ENCODE measurements at regions of chrX and their contacts with region 1.

Region 1: GRCh38 chrX:11470250-11470974 is 177.2 kb downstream of the AMELX start:
- DNase-seq: no peak
- H3K4me3 ChIP-seq: no peak overlapping the region
- H3K27ac ChIP-seq: no peak overlapping the region
- H3K4me1 ChIP-seq: no peaks in the 10 kb centered on the region
- H3K27me3 ChIP-seq: no peaks in the 10 kb centered on the region
- CTCF ChIP-seq: no peak
- POLR2A ChIP-seq: no peak

Region 2: DNA sequence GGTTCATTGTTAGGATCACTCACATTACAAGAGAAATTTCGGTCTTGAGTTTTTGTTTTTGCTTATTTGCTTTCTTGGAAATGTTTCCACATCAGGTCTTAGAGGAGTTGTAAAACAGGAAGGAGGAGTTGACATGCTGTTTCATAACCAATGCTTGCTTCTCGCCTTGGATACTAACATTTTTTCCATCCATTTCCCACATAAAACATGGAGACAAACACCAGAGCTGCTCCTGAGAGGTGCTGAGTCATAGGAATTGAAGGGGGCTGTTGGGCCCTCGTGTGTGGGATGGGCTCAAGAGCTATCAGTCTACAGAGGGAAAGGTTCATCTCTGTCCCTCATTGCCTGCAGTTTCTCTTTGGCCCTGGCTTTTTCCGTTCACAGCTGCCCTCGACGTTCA is 1975.6 kb before region 1 on chrX:
- intact Hi-C with region 1: no loop called
- DNase-seq: no peak
- H3K4me3 ChIP-seq: no peak overlapping the region
- H3K27ac ChIP-seq: peak overlapping the region; percentile 27
- H3K4me1 ChIP-seq: no peaks in the 10 kb centered on the region
- H3K27me3 ChIP-seq: no peaks in the 10 kb centered on the region
- CTCF ChIP-seq: no peak
- POLR2A ChIP-seq: no peak

Region 3: GRCh38 chrX:9758021-9758638 is 1712.3 kb before region 1 on chrX:
- intact Hi-C with region 1: no loop called
- DNase-seq: no peak
- H3K4me3 ChIP-seq: no peak overlapping the region
- H3K27ac ChIP-seq: no peak overlapping the region
- H3K4me1 ChIP-seq: no peaks in the 10 kb centered on the region
- H3K27me3 ChIP-seq: no peaks in the 10 kb centered on the region
- CTCF ChIP-seq: no peak
- POLR2A ChIP-seq: no peak

Region 4: DNA sequence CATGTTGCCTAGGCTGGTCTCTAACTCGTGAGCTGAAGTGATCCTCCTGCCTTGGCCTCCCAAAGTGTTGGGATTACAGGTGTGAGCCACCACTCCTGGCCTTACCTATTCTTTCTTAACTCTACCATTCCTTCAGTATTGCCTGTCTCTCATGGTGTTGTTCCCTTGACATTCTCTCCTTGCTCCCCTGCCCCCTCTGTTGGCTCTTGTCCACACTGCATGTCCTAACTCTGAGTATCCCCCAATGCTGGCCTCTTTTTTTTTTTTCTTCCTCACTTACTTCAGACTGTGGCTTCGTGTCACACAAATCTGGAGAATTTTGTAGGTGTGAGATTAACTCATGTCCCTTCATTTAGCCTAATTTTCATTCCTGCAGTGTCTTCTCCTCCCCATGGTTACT is 645.0 kb after region 1 on chrX:
- intact Hi-C with region 1: no loop called
- DNase-seq: no peak
- H3K4me3 ChIP-seq: no peak overlapping the region
- H3K27ac ChIP-seq: no peak overlapping the region
- H3K4me1 ChIP-seq: no peaks in the 10 kb centered on the region
- H3K27me3 ChIP-seq: no peaks in the 10 kb centered on the region
- CTCF ChIP-seq: no peak
- POLR2A ChIP-seq: no peak

Region 5: GRCh38 chrX:12984629-12985319 is 1514.4 kb after region 1 on chrX:
- intact Hi-C with region 1: loop called (anchors 5 kb)
- DNase-seq: no peak
- H3K4me3 ChIP-seq: no peak overlapping the region
- H3K27ac ChIP-seq: no peak overlapping the region
- H3K4me1 ChIP-seq: peaks cover 19% of the 10 kb centered on the region
- H3K27me3 ChIP-seq: no peaks in the 10 kb centered on the region
- CTCF ChIP-seq: no peak
- POLR2A ChIP-seq: no peak

Measured in vagina (tissue), 2 donors.